ENCODE measurements at regions of chr2 and their contacts with region 1.

Region 1: GRCh38 chr2:64918220-64918886 is 70.8 kb upstream of the SLC1A4 start:
- H3K4me3 ChIP-seq: no peak overlapping the region
- H3K27ac ChIP-seq: no peak overlapping the region
- H3K4me1 ChIP-seq: no peaks in the 10 kb centered on the region
- CTCF ChIP-seq: no peak

Region 2: GRCh38 chr2:65031341-65032018 is 113.1 kb after region 1 on chr2:
- CTCF ChIA-PET with region 1: interaction called, 14 read pairs
- POLR2A ChIA-PET with region 1: no interaction called
- H3K4me3 ChIP-seq: no peak overlapping the region
- H3K27ac ChIP-seq: no peak overlapping the region
- H3K4me1 ChIP-seq: peaks cover 9% of the 10 kb centered on the region
- CTCF ChIP-seq: no peak

Region 3: DNA sequence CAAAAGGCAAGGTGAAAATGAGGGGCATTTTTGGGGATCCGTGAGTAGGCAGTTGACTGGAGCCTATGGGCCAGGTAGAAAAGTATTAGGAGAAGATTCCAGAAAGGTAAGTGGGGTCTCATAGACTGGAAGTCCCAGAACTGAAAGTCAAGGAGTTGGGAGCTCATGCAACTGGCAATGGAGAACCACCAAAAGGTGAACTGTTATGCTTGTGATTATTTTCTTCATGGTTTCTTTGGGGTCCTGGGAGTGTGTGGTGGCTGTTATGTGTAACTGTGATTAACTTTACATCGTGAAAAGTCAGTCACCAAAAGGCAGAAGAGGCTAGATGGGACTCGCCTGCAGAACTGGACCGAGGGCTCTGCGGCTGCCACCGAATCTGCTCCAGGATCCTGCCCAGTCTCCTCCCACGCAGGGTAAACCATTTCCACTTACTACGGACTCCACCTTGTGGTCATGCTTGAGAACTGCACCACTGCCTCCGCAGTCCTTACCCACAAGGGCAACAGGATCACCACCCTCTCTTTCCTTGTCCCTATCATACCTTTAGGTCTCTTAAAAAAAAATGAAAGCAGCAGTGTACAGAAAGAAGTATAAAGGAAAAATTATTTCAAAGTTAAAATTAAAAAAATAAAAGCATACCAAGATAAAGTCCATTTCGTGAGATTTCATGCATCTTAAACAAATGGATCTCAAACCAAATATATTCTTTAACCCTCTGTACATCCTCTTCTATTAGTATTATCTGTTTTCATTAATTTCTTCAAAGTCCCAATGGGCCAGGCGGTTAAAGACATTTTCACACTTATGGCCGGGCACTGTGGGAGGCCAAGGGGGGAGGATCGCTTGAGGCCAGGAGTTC is 122.3 kb after region 1 on chr2:
- CTCF ChIA-PET with region 1: interaction called, 15 read pairs
- POLR2A ChIA-PET with region 1: interaction called, 3 read pairs
- H3K4me3 ChIP-seq: no peak overlapping the region
- H3K27ac ChIP-seq: no peak overlapping the region
- H3K4me1 ChIP-seq: no peaks in the 10 kb centered on the region
- CTCF ChIP-seq: peak; percentile 88

Measured in HEK293 (cell line).